Gastrocnemius medialis (tissue), 4 donors: ENCODE measurements at regions of chr17 and their contacts with region 1.

Region 1: DNA sequence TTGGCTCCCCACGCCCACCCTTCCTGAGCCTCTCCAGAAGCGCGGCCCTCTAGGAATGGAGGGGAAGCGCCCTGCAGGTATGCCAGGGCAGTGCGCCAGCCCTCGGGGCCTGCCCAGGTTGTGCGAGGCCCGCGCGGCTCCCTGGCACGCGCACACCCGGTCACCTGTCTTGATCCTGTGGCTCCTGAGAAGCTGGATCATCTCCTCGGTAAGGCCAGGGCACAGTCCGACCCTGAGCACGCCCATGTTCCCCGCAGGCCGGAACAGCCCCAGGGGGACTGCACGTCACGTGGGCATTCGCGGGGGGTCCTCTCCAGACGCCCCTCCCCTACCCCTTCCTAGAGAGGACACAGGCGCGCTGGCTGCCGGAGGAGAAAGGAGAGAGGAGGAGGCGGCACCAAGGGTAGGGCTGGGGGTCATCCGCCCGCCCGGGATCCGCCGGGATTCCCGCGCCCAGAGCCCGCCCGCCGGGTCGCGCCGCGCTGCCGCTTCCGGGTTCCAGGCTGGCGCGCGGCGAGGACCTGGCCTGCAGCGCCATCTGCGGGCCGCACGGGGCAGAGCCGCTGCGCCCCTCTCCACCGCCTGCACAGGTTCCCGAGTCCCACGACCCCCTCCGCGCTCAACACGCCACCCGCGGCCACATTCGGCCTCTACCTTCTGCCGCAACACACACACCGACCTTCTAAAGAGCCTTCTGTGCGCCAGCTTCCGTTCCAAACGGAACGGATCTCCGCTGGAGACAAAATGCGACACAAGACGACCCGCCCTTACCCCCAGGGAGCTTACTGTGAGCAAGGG is at the start of gene RAD51D:
- DNase-seq: peak; percentile 23 to 46
- ATAC-seq: peak; percentile 91 to 96
- H3K4me3 ChIP-seq: peak within 1 kb of the TSS; percentile 70 to 98 (median 75)
- H3K27ac ChIP-seq: peak within 1 kb of the TSS; percentile 64 to 79 (median 73)
- H3K4me1 ChIP-seq: peaks cover 6 to 7% of the 10 kb centered on the region in 2 donors
- H3K27me3 ChIP-seq: no peaks in the 10 kb centered on the region
- CTCF ChIP-seq: peak; percentile 85 to 99 (median 96)
- POLR2A ChIP-seq: no peak
- total RNA-seq, gene RAD51D: 2.5 to 5.2 (median 2.8) TPM

Region 2: DNA sequence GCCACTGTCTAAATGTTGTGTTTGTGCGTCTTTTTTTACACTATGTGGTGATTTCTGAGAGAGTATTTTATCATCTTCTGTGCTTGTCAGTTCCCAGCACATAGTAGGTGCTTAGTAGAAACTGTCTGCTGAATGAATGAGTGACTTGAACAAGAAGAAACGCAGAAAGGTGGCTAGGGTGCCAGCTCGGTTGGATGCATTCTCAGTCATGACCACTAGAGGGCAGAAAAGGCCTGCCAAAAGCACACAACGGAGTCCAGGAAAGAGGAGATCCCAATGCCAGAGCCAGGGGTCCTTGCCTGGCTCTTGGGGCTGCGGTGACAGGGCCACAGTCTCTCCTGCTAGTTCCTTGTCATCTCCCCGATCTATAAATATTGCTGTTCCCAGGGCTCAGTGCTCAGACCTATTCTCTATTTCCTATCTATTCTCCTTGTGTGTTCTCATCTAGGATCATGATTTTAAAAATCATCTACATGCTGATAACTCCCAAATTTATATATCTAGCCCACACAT is 699.3 kb before region 1 on chr17:
- in situ Hi-C with region 1: loop called (anchors 5 to 10 kb)
- intact Hi-C with region 1: loop called (anchors 1 kb)
- DNase-seq: peak; percentile 18 to 34
- ATAC-seq: peak; percentile 26 to 41
- H3K4me3 ChIP-seq: no peak overlapping the region
- H3K27ac ChIP-seq: no peak overlapping the region
- H3K4me1 ChIP-seq: peaks cover 0 to 3% of the 10 kb centered on the region in 2 donors
- H3K27me3 ChIP-seq: peaks cover 10 to 19% (median 17%) of the 10 kb centered on the region in 3 donors
- CTCF ChIP-seq: peak; percentile 74 to 91 (median 84)
- POLR2A ChIP-seq: no peak

Region 3: DNA sequence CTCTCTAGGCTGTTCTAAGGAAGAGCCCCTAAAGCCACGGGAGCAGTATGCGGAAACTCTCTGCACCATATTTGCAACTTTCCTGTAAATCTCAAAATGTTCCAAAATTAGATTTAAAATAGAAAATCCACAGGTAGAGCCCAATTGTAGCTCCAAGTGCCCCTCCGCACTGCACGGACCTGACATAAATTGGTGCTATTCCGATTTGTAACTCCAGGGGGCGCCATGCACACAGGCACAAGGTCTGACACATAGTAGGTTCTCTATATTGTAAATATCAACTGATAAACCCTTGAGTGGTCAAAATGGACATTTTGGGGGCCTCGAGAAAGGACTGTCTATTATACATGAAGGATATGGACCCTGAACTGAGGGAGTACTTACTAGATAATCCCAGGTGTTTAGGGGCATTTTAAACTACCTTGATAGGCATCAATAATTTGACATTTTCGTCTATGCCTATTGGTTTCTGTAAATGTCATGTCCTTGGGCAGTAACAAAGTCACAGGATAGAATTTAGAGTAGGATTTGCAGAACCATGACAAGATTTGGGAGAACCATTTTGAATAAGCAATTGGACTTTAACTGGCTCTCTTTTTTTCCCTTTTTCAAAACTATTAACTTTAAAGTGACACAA is 576.7 kb before region 1 on chr17:
- in situ Hi-C with region 1: loop called (anchors 10 to 25 kb)
- intact Hi-C with region 1: loop called (anchors 1 kb)
- DNase-seq: no peak
- ATAC-seq: no peak
- H3K4me3 ChIP-seq: no peak overlapping the region
- H3K27ac ChIP-seq: no peak overlapping the region
- H3K4me1 ChIP-seq: no peaks in the 10 kb centered on the region
- H3K27me3 ChIP-seq: no peaks in the 10 kb centered on the region
- CTCF ChIP-seq: peak; percentile 59 to 78 (median 71)
- POLR2A ChIP-seq: no peak

Region 4: GRCh38 chr17:34961093-34961911 is 158.3 kb before region 1 on chr17 and contains the starts of genes CCT6B and ZNF830:
- in situ Hi-C with region 1: no loop called
- intact Hi-C with region 1: loop called (anchors 1 kb)
- DNase-seq: peak; percentile 86 to 89
- ATAC-seq: peak; percentile 99 to 100
- H3K4me3 ChIP-seq: peak within 1 kb of the TSS; percentile 77 to 97 (median 92)
- H3K27ac ChIP-seq: peak within 1 kb of the TSS; percentile 90 to 98 (median 93)
- H3K4me1 ChIP-seq: peaks cover 23 to 26% of the 10 kb centered on the region in 2 donors
- H3K27me3 ChIP-seq: no peaks in the 10 kb centered on the region
- CTCF ChIP-seq: no peak
- POLR2A ChIP-seq: peak; percentile 51 to 60
- total RNA-seq, gene CCT6B: 1.4 to 5.4 (median 2.8) TPM
- total RNA-seq, gene ZNF830: 6.0 to 11.0 (median 7.2) TPM

Region 5: GRCh38 chr17:35088881-35089585 is 30.5 kb before region 1 on chr17:
- in situ Hi-C with region 1: no loop called
- intact Hi-C with region 1: loop called (anchors 1 kb)
- DNase-seq: peak; percentile 60 to 79
- ATAC-seq: peak; percentile 88 to 93
- H3K4me3 ChIP-seq: peak overlapping the region; percentile 66 to 100 (median 82)
- H3K27ac ChIP-seq: peak overlapping the region; percentile 56 to 77 (median 74)
- H3K4me1 ChIP-seq: peaks cover 6 to 14% of the 10 kb centered on the region in 2 donors
- H3K27me3 ChIP-seq: no peaks in the 10 kb centered on the region
- CTCF ChIP-seq: peak; percentile 70 to 93 (median 86)
- POLR2A ChIP-seq: peak; percentile 33 to 36